Head of caudate nucleus (tissue), 42 donors: ENCODE measurements at regions of chr12 and their contacts with region 1.

Region 1: DNA sequence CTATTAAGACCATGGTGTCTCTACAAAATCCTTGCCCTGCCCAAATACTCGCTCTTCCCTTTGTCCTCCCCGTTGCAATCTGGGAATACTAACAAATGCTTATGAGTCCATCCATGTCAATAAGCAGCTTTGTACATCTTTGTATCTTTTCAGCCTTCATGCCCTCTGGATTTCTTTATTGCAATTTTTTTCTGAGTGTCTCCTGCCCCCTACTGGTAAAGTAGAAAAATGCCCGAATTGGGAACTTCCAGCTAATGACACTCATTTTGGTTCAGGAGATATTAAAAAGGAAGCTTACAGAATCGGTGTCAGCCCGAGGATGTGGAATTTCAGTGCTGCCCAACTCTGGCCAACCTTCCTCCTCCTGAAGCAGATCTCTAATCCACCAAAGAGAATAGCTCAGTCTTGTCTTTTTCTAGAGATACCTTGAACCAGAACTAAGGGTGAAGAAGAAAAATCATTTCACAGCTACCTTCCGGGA is 46.0 kb downstream of the SH2B3 start:
- DNase-seq: peak in 10 of 42 donors; percentile 7 to 75 (median 16)

Region 2: GRCh38 chr12:111093428-111094142 is 358.1 kb before region 1 on chr12:
- intact Hi-C with region 1: no loop called
- DNase-seq: peak in 6 of 42 donors; percentile 7 to 34 (median 14)

Region 3: GRCh38 chr12:111181143-111181726 is 270.5 kb before region 1 on chr12:
- intact Hi-C with region 1: no loop called
- DNase-seq: peak in 39 of 42 donors; percentile 15 to 82 (median 62)

Region 4: DNA sequence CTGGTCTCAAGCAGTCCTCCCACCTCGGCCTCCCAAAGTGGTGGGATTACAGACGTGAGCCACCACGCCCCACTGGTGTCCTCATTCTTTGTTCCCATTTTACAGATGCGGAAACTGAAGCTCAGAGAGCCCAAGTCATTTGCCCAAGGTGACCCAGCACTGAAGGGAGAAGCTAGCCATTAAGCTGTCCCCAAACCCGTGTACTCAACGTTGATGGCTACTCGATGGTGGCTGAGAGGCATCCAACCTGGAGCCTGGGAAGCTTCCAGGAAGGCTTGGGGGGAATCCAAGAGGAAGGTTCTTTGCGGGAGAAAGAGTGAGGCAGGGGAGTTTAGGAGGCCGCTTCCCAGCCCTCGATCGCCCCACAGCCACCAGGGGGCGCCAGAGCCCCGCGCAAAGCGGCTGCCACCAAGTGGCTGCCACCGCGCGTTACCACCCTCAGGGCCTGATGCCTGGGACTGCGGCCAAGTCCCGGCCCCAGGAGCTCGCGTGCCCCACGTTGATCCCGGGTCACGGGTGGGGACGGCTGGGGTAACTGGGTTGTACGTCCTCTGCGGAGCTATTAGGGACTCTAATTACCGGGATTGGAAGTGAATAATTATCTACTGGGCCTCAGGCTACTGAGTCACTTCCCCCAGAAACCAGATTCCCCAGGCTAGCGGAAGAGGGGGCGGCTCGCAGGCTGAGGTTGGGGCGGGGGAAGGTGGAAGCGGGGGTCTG is 54.8 kb before region 1 on chr12:
- intact Hi-C with region 1: loop called (anchors 2 kb)
- DNase-seq: peak; percentile 67 to 95 (median 90)

Region 5: GRCh38 chr12:111407377-111408115 is 44.1 kb before region 1 on chr12:
- intact Hi-C with region 1: no loop called
- DNase-seq: no peak

Region 6: DNA sequence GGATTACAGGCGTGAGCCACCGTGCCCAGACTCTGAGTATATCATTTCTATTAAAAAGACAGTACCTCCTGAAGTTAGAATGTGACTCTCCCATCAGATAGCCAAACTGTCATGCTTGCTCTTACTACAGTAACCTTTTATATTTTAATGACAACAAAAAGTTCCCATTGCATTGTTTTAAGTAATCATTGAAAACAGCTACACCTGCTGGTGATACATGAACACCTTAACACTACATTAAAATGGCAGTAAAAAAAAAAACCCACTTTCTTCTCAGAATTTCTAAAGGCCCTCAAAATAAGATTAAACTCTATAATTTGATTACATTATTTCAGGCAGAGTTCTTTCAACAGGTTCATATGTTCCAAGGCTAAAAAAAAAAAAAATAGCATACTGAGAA is 30.8 kb after region 1 on chr12:
- intact Hi-C with region 1: no loop called
- DNase-seq: no peak